ENCODE measurements at regions of chr2 and their contacts with region 1.

Region 1: GRCh38 chr2:185640588-185640987 is 98.0 kb upstream of the FSIP2 start:
- DNase-seq: no peak
- H3K4me3 ChIP-seq: no peak overlapping the region
- H3K27ac ChIP-seq: no peak overlapping the region
- H3K4me1 ChIP-seq: no peaks in the 10 kb centered on the region
- H3K27me3 ChIP-seq: no peaks in the 10 kb centered on the region
- CTCF ChIP-seq: no peak

Region 2: DNA sequence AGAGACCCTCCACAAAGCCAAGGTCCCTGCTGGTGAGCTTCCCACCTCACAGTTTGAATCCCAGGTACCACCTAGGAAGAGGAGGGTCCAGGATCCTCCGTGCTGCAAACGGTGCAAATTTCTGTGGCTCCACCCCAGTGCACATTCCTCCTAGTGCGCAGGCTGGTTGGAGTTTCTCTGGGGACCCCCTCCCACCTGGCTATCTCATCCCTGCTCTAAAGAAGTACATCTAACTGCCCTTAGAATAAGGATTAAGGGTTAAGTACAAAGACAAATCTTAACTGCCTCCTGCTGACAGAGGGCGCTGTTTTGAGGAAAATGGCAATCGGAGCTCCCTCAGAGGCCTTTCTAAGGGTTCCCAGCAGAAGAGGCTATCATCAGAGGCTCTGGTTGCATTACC is 11.6 kb before region 1 on chr2:
- CTCF ChIA-PET with region 1: interaction called, 12 read pairs
- POLR2A ChIA-PET with region 1: no interaction called
- intact Hi-C with region 1: no loop called
- DNase-seq: peak; percentile 38
- H3K4me3 ChIP-seq: no peak overlapping the region
- H3K27ac ChIP-seq: no peak overlapping the region
- H3K4me1 ChIP-seq: no peaks in the 10 kb centered on the region
- H3K27me3 ChIP-seq: no peaks in the 10 kb centered on the region
- CTCF ChIP-seq: peak; percentile 57